Breast epithelium (tissue), 4 donors: ENCODE measurements at regions of chr9 and their contacts with region 1.

Region 1: DNA sequence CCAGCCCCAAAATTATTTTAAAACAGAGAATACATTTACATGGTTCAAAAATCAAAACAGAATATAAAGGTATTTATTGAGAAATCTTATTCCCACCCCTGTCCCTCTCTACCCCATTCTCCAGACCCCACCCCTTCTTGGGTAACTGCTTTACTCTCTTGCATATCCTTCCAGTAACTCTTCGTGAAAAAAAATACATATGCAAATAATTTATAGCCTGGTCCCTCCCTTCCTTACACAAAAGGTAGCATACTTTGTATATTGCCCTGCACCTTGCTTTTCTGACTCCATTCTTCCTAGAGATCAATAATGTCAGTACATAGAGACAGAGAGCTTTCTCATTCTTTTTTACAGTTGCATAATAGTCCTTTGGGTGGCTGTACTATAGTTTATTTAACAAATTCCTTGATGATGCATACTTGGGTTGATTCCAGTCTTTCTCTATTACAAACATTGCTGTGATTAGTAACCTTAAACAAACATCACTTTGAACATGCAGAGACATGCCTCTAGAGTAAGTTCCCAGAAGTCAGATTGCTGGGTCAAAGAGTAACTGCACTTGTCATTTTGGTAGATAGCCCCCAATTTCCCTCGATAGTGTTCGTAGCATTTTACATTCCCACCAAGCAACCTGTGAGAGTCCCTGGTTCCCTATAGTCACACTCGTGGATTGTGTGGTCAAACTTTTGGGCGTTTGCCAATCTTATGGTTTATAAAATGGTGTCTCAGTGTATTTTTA is 47.8 kb downstream of the STOM start:
- DNase-seq: no peak
- H3K4me3 ChIP-seq: no peak overlapping the region
- H3K27ac ChIP-seq: peak overlapping the region; percentile 79 to 95
- H3K4me1 ChIP-seq: peaks cover 12 to 20% of the 10 kb centered on the region in 2 donors
- H3K27me3 ChIP-seq: no peaks in the 10 kb centered on the region
- CTCF ChIP-seq: no peak
- POLR2A ChIP-seq: no peak

Region 2: DNA sequence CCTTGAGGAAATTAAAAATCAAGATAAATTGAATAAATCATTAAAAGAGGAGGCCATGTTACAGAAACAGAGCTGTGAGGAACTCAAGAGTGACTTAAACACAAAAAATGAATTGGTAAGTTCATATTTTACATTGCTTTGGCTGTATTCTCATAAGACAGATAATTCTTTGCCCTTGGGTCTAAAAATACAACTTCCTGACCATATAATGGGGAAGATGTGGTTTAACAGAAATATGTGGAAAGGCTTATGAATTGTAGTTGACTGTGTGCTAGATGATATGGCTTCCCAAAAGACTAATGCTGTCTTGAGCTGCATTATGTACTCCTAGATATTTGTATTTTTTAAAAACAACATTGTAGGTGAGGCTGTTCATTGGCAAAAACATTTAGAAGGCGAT is 214.3 kb before region 1 on chr9:
- intact Hi-C with region 1: no loop called
- DNase-seq: no peak
- H3K4me3 ChIP-seq: no peak overlapping the region
- H3K27ac ChIP-seq: no peak overlapping the region
- H3K4me1 ChIP-seq: no peaks in the 10 kb centered on the region
- H3K27me3 ChIP-seq: no peaks in the 10 kb centered on the region
- CTCF ChIP-seq: no peak
- POLR2A ChIP-seq: no peak

Region 3: DNA sequence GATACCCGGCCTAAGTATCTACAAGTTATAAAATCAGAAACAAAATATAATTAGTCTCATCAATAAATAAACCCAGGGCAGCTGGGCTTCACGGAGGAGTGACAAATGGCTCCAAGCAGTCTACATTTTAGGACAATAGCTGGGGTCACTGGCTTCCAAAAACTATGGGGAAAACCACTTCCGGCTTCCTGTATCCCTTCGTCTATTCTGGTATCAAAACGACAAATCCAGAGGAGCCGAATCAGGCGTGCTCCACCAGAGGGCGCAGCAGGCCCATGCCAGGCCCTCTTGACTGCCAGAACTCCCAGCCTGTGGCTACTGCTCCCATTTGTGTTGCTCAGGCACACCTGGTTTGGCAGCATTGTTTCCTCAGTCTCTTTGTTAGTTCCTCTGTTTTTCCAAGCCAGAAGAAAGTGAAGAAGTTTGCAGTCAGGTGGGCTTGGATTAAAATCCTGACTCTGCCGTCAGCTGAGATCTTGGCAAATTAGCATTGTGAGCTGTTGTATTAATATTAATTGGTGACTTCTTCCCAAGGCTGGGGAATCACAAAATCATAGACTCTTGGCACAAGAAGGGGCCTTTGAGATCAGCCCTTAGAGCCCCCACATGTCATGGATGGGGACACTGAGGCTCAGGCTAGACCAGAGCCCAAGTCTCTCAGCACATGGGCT is 108.9 kb before region 1 on chr9:
- intact Hi-C with region 1: loop called (anchors 10 kb)
- DNase-seq: peak; percentile 92 to 94
- H3K4me3 ChIP-seq: no peak overlapping the region
- H3K27ac ChIP-seq: peak overlapping the region; percentile 66 to 79
- H3K4me1 ChIP-seq: peaks cover 0 to 7% of the 10 kb centered on the region in 2 donors
- H3K27me3 ChIP-seq: no peaks in the 10 kb centered on the region
- CTCF ChIP-seq: peak; percentile 97 to 98 (median 98)
- POLR2A ChIP-seq: no peak

Region 4: GRCh38 chr9:121369595-121370265 is 47.5 kb after region 1 on chr9 and contains the start of gene STOM:
- intact Hi-C with region 1: loop called (anchors 5 kb)
- DNase-seq: peak; percentile 75 to 81
- H3K4me3 ChIP-seq: peak within 1 kb of the TSS; percentile 68 to 90 (median 77)
- H3K27ac ChIP-seq: peak within 1 kb of the TSS; percentile 96 to 99
- H3K4me1 ChIP-seq: peaks cover 4 to 27% of the 10 kb centered on the region in 2 donors
- H3K27me3 ChIP-seq: no peaks in the 10 kb centered on the region
- CTCF ChIP-seq: no peak
- POLR2A ChIP-seq: peak; percentile 99
- total RNA-seq, gene STOM: 263 to 444 (median 334) TPM